ENCODE measurements at regions of chr18 and their contacts with region 1.

Region 1: DNA sequence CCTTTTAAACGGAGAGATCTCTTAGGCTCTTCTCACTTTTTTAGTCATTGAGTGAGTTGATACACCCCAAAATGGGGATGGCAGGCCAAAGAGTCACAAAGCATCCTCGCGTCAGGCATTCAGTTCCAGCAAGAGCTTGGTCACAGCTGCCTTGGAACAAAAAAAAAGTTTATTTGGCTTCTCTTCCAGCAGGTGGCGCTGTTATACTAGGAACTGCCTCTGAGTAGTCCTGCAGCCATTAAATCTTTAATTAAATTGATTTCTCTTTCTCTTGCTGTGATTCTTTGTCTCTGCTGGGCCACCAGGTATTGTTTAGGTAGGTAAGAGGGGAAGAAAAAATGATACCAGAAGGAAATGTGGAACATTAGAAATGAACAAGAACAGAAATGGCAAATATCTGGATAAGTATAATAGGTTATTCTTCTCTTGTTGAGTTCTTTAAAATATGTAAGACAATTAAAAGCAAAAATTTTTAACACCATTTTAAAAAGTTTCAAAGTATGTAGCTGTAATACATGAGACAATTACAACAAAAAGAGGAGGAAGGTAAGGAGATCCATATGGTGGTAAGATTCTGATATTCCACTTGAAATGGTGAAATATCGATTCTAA is 175.1 kb downstream of the GALNT1 start:
- ATAC-seq: peak; percentile 74 to 90 (median 83)
- H3K4me3 ChIP-seq: no peak overlapping the region
- H3K27ac ChIP-seq: no peak overlapping the region
- H3K4me1 ChIP-seq: no peaks in the 10 kb centered on the region

Region 2: DNA sequence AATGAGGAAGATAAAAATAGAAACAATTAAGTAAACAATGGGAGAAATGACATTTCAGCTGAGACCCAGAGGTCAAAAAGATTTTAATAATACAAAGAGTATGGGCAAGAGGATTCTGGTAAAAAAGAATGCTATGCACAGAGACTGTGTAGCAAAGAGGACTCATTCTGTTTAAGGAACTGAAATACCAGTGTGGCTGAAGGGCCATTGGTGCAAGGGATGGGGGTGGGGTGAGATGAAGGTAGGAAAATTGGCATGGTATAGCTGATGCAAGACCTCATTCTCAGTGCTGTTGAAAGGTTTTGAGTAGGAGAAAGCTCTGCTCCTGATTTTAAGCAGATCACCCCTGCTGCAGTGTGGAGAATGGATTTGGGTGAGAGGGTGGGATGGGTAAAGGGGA is 164.3 kb before region 1 on chr18:
- in situ Hi-C with region 1: no loop called
- ATAC-seq: no peak
- H3K4me3 ChIP-seq: no peak overlapping the region
- H3K27ac ChIP-seq: no peak overlapping the region
- H3K4me1 ChIP-seq: no peaks in the 10 kb centered on the region

Region 3: GRCh38 chr18:35703043-35703688 is 53.4 kb before region 1 on chr18:
- in situ Hi-C with region 1: no loop called
- ATAC-seq: peak in 2 of 8 experiments; percentile 50 to 70
- H3K4me3 ChIP-seq: no peak overlapping the region
- H3K27ac ChIP-seq: no peak overlapping the region
- H3K4me1 ChIP-seq: no peaks in the 10 kb centered on the region

Region 4: GRCh38 chr18:35949903-35950627 is 193.5 kb after region 1 on chr18:
- in situ Hi-C with region 1: loop called in 5 of 9 experiments (anchors 10 to 25 kb)
- ATAC-seq: peak; percentile 90 to 94 (median 93)
- H3K4me3 ChIP-seq: peak overlapping the region; percentile 48 to 71 (median 59)
- H3K27ac ChIP-seq: no peak overlapping the region
- H3K4me1 ChIP-seq: peaks cover 0 to 2% of the 10 kb centered on the region in 2 donors

Region 5: GRCh38 chr18:35972197-35973052 is 215.8 kb after region 1 on chr18 and contains the start of gene RMP24:
- in situ Hi-C with region 1: loop called in 4 of 9 experiments (anchors 25 kb)
- ATAC-seq: peak; percentile 78 to 97 (median 94)
- H3K4me3 ChIP-seq: peak within 1 kb of the TSS; percentile 60 to 94 (median 79)
- H3K27ac ChIP-seq: peak within 1 kb of the TSS; percentile 76 to 84
- H3K4me1 ChIP-seq: peaks cover 8 to 13% of the 10 kb centered on the region in 2 donors

Region 6: DNA sequence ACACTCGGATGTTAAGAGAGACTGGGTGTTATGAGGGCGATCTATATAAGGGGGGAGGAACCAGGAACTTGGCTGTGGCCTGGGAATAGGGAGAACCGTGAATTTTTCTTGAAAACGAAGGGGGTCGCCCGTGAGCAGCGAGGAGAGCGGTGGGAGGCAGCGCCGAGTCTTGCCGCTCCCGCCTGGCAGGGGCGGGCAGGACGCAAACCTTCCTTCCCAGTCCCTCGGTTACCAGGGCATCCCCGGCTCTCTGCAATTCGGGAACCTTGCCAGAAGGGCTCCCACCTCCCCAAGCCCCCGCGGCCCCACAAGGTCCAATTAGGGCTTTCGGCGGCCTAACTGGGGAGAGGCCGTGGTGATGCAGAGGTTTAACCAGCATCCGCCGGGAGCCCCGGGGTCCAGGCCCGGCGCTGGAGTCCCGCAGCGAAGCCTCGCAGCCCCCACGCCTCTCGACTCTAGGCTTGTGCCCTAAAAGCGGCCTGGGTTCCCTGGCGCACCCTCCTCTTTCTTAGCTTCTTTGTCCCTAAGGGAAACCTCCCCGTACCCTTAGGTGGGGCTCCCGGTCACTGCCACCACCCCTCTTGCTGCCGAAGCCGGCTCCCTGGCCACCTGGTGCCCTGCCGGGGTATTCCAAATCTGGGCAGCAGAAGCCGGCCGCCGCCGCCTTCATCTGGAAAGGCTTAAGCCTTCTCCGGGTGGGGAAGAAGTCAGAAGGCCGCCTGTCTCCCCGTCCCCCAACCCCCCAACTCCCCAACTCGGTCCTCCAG is 540.2 kb after region 1 on chr18:
- in situ Hi-C with region 1: loop called in 2 of 9 experiments (anchors 25 kb)
- ATAC-seq: peak; percentile 51 to 72 (median 61)
- H3K4me3 ChIP-seq: peak overlapping the region; percentile 60 to 98 (median 79)
- H3K27ac ChIP-seq: peak overlapping the region; percentile 78 to 89
- H3K4me1 ChIP-seq: peaks cover 5 to 13% of the 10 kb centered on the region in 2 donors